Calu3 (cell line): ENCODE measurements at regions of chr17 and their contacts with region 1.

Region 1: GRCh38 chr17:32783602-32784001 is 93.3 kb downstream of the MYO1D start:
- DNase-seq: no peak
- H3K4me3 Mint-ChIP-seq: no peak overlapping the region
- H3K27ac Mint-ChIP-seq: no peak overlapping the region
- H3K4me1 Mint-ChIP-seq: no peaks in the 10 kb centered on the region
- H3K27me3 Mint-ChIP-seq: no peaks in the 10 kb centered on the region
- CTCF ChIP-seq: peak; percentile 64

Region 2: GRCh38 chr17:32909787-32910369 is 126.3 kb after region 1 on chr17:
- CTCF ChIA-PET with region 1: interaction called, 10 read pairs
- intact Hi-C with region 1: loop called (anchors 1 kb)
- DNase-seq: peak; percentile 79
- H3K4me3 Mint-ChIP-seq: no peak overlapping the region
- H3K27ac Mint-ChIP-seq: no peak overlapping the region
- H3K4me1 Mint-ChIP-seq: no peaks in the 10 kb centered on the region
- H3K27me3 Mint-ChIP-seq: peaks cover 29% of the 10 kb centered on the region
- CTCF ChIP-seq: peak; percentile 71

Region 3: DNA sequence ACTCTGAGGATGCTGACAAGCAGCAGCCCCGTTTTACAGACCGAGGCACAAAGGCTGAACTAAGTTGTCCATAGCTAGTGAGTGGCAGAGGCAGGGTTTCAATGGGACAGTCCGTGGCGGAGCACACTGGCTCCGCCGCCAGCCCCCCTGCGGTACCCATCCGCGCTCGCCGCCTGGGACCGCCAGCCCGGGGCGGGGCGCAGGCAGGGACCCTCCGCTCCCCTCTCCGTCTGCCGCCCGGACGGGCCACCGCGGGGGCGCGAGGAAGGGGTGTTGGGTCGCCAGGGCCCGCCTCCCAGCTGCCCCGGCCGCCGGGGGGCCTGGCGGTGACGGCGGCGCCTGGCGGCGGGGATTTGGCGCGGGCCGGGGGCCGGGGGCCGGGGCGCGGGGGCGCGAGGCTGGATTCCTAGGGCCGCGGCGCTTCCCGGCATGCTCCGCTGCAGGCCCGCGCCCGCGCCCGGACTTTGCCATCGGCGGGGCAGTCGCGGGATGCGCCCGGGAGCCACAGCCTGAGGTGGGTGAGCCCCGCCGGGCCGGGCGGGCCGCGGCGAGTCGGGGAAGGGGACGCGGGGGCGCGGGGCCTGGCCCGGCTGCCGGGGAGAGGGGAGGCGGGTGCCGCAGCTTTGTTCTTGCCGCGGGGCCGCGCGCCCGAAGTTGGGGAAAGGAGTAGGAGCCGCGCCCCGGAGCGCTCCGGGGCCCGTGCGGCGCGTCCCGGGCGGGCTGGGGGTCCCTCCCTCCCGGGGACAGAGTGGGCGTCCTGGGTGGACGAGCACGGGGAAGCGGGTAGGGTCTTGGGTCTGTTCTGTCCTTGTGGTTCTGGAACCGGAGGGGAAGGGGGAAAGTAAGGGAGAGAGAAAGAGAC is 144.4 kb after region 1 on chr17 and contains the start of gene TMEM98:
- CTCF ChIA-PET with region 1: no interaction called
- intact Hi-C with region 1: no loop called
- DNase-seq: peak; percentile 30
- H3K4me3 Mint-ChIP-seq: no peak within 1 kb of the TSS
- H3K27ac Mint-ChIP-seq: no peak within 1 kb of the TSS
- H3K4me1 Mint-ChIP-seq: no peaks in the 10 kb centered on the region
- H3K27me3 Mint-ChIP-seq: peaks cover 7% of the 10 kb centered on the region
- CTCF ChIP-seq: no peak
- total RNA-seq, gene TMEM98: 1.9 and 2.1 TPM in 2 replicates

Region 4: GRCh38 chr17:32997753-32998632 is 214.4 kb after region 1 on chr17:
- CTCF ChIA-PET with region 1: interaction called, 3 read pairs
- intact Hi-C with region 1: loop called (anchors 2 kb)
- DNase-seq: peak; percentile 83
- H3K4me3 Mint-ChIP-seq: peak overlapping the region; percentile 28
- H3K27ac Mint-ChIP-seq: no peak overlapping the region
- H3K4me1 Mint-ChIP-seq: peaks cover 8% of the 10 kb centered on the region
- H3K27me3 Mint-ChIP-seq: peaks cover 24% of the 10 kb centered on the region
- CTCF ChIP-seq: peak; percentile 82